ENCODE measurements at regions of chr16 and their contacts with region 1.

Region 1: DNA sequence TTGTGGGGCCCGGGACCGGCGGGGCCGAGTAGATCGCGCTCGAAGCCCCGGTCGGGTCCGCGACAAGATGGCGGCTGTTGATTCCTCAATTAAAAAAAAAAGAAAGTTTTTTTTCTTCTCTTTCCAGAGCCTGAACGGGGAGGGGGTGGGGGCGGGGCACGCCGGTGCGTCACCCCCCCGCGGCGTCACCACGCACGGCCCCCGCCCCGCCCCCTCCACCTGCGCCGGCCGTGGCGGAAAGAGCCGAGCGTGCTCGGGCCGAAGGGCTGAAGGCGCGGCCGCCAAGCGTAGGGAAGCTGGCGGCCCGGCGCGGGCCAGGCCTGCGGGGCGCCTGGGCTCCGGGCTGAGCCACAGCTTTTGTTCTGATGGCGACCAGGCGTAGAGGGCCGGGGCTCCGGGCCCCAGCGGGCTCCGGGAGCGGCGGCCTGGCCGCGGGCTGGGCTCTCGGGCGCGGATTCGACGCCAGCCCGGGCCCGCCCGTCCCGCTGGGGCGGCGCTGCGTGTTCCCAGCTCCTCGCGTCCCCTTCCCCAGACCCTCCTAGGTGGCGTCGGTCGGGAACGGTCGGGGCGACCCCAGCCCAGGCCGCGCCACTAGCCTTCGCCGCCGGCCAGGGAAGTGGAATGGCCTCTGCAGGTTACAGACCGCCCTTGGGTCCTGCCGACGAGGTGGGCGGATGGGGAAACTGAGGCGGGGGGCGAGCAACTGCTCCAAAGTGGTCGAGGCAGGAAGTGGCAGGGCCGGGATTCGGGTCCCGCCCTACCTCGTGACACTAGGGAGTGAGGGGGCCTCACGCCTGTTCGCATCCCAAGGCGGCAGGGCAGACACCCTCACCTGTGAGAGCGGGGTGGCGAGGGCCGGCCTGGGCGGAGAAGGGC is at the start of gene CREBBP:
- DNase-seq: peak; percentile 93
- ATAC-seq: peak; percentile 89
- H3K4me3 Mint-ChIP-seq: peak within 1 kb of the TSS; percentile 79
- H3K27ac Mint-ChIP-seq: peak within 1 kb of the TSS; percentile 69
- H3K4me1 Mint-ChIP-seq: peaks cover 36% of the 10 kb centered on the region
- H3K27me3 Mint-ChIP-seq: peaks cover 6% of the 10 kb centered on the region
- total RNA-seq, gene CREBBP: 28.1 to 37.4 TPM

Region 2: DNA sequence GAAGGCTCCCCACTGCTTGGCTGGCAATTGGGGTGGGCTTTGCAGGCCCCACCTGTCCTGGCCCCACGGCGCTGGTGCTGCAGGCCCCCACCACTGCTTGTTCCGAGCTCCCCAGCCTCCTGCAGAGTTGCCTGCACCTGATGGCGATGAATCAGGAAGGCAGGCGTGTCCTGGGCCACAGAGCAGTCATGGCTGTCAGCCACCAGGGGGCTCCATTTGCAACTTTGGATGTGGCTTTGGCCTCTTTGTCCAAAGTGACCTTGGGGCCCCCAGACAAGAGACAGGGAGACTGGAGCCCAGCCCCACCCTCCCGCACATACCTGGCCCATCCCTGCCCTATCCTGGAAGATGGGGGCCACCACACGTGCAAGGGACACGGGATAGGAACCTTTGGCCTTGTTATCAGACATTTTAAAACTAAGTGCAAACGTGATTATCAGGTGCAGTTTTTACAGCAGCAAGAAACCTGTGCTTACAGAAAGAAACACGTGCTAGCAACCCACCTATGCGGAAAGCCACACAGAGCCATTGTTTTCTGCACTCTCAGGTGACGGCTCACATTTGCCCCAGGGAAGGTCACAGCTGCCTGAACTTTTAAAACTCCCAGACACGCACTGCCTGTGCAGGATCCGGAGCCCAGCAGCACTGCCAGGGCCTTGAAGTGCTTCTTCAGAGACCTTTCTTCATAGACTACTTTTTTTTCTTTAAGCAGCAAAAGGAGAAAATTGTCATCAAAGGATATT is 226.4 kb before region 1 on chr16 and contains the start of gene DNASE1:
- CTCF ChIA-PET with region 1: no interaction called
- POLR2A ChIA-PET with region 1: no interaction called
- intact Hi-C with region 1: loop called in 1 of 2 experiments (anchors 1 kb)
- DNase-seq: peak; percentile 82
- ATAC-seq: peak; percentile 92
- H3K4me3 Mint-ChIP-seq: no peak within 1 kb of the TSS
- H3K27ac Mint-ChIP-seq: peak within 1 kb of the TSS; percentile 34
- H3K4me1 Mint-ChIP-seq: peaks cover 4% of the 10 kb centered on the region
- H3K27me3 Mint-ChIP-seq: no peaks in the 10 kb centered on the region
- total RNA-seq, gene DNASE1: 10.1 to 11.3 TPM

Region 3: GRCh38 chr16:3690470-3690928 is 190.4 kb before region 1 on chr16:
- CTCF ChIA-PET with region 1: interaction called, 4 read pairs
- POLR2A ChIA-PET with region 1: interaction called, 9 read pairs
- intact Hi-C with region 1: loop called (anchors 1 to 2 kb)
- DNase-seq: peak; percentile 90
- ATAC-seq: peak; percentile 99
- H3K4me3 Mint-ChIP-seq: no peak overlapping the region
- H3K27ac Mint-ChIP-seq: no peak overlapping the region
- H3K4me1 Mint-ChIP-seq: peaks cover 7% of the 10 kb centered on the region
- H3K27me3 Mint-ChIP-seq: no peaks in the 10 kb centered on the region

Region 4: DNA sequence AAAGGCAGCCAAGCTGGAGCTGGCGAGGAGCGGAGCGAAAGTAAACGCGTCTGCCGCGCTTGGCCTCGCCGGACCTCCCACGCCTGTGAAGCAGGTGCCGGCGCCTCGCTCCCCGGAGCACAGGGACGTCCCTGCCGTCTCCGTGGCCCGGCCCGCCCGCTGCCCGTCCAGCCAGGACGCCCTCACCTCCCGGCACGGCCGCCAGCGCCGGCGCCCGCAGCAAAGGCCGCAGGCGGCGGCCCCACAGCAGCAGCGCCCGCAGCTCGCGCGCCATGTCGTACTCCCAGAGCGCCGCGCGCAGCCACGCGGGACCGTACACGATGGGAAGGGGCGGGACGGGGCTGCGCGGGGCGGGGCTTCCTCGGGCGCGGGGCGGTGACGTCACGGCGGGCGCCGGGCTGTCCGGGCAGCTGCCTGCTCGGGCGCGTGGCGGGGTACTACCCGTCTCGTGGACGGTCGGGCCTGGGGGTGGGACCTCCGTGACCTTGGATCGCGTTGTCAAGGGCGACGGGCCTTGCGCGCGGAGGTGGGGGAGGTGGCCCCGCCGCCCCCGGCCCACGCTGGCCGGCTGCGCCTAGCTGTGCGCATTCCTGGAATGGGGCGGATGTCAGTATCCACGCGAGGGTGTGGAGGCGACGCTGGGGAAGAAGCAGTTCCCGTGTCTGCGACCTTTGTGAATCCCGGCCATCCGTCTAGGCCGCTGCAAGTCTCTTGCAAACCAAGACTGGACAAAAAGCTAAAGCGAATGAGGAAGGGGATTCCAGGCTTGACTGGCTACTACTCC is 163.4 kb before region 1 on chr16 and contains the start of gene TRAP1:
- CTCF ChIA-PET with region 1: no interaction called
- POLR2A ChIA-PET with region 1: no interaction called
- intact Hi-C with region 1: loop called (anchors 1 to 10 kb)
- DNase-seq: peak; percentile 95
- ATAC-seq: peak; percentile 95
- H3K4me3 Mint-ChIP-seq: peak within 1 kb of the TSS; percentile 89
- H3K27ac Mint-ChIP-seq: peak within 1 kb of the TSS; percentile 92
- H3K4me1 Mint-ChIP-seq: peaks cover 44% of the 10 kb centered on the region
- H3K27me3 Mint-ChIP-seq: no peaks in the 10 kb centered on the region
- total RNA-seq, gene TRAP1: 306 to 360 TPM

Region 5: GRCh38 chr16:3787924-3788661 is 92.8 kb before region 1 on chr16:
- CTCF ChIA-PET with region 1: no interaction called
- POLR2A ChIA-PET with region 1: interaction called, 6 read pairs
- intact Hi-C with region 1: loop called (anchors 1 to 5 kb)
- DNase-seq: no peak
- ATAC-seq: no peak
- H3K4me3 Mint-ChIP-seq: no peak overlapping the region
- H3K27ac Mint-ChIP-seq: no peak overlapping the region
- H3K4me1 Mint-ChIP-seq: peaks cover 47% of the 10 kb centered on the region
- H3K27me3 Mint-ChIP-seq: peaks cover 9% of the 10 kb centered on the region

Region 6: DNA sequence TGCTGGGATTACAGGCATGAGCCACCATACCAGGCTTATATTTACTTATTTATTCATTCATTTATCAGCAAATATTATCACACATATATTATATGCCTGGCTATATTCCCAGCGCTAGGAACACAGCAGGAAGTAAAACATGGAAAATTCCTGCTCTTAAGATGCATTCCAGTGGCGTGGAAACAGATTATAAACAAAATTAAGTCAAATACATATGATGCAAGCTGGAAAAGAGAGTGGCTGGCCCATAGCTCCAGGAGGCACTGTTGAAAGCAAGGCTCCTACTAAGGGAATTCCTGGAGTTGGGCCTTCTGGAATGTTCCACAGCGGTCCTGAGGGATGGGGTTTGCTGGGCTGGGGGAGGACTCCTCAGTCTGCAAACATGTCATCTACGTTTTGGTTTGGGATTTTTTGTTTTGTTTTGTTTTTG is 217.0 kb after region 1 on chr16:
- CTCF ChIA-PET with region 1: no interaction called
- POLR2A ChIA-PET with region 1: no interaction called
- intact Hi-C with region 1: no loop called
- DNase-seq: no peak
- ATAC-seq: no peak
- H3K4me3 Mint-ChIP-seq: no peak overlapping the region
- H3K27ac Mint-ChIP-seq: no peak overlapping the region
- H3K4me1 Mint-ChIP-seq: peaks cover 2% of the 10 kb centered on the region
- H3K27me3 Mint-ChIP-seq: no peaks in the 10 kb centered on the region

Region 7: GRCh38 chr16:4183237-4184036 is 302.6 kb after region 1 on chr16:
- CTCF ChIA-PET with region 1: interaction called, 3 read pairs
- POLR2A ChIA-PET with region 1: no interaction called
- intact Hi-C with region 1: loop called in 1 of 2 experiments (anchors 1 kb)
- DNase-seq: peak; percentile 94
- ATAC-seq: peak; percentile 95
- H3K4me3 Mint-ChIP-seq: peak overlapping the region; percentile 76
- H3K27ac Mint-ChIP-seq: peak overlapping the region; percentile 47
- H3K4me1 Mint-ChIP-seq: peaks cover 6% of the 10 kb centered on the region
- H3K27me3 Mint-ChIP-seq: no peaks in the 10 kb centered on the region

Region 8: GRCh38 chr16:4766874-4767628 is 886.2 kb after region 1 on chr16 and contains the start of gene ZNF500:
- CTCF ChIA-PET with region 1: no interaction called
- POLR2A ChIA-PET with region 1: no interaction called
- intact Hi-C with region 1: loop called in 1 of 2 experiments (anchors 5 kb)
- DNase-seq: peak; percentile 97
- ATAC-seq: peak; percentile 78
- H3K4me3 Mint-ChIP-seq: peak within 1 kb of the TSS; percentile 89
- H3K27ac Mint-ChIP-seq: peak within 1 kb of the TSS; percentile 91
- H3K4me1 Mint-ChIP-seq: peaks cover 25% of the 10 kb centered on the region
- H3K27me3 Mint-ChIP-seq: no peaks in the 10 kb centered on the region
- total RNA-seq, gene ZNF500: 10.3 to 11.6 TPM

Measured in activated CD4-positive, alpha-beta T cell treated with anti-CD3 and anti-CD28 coated beads for 36 hours (primary cell).